ENCODE measurements at regions of chr16 and their contacts with region 1.

Region 1: GRCh38 chr16:75244844-75245758 is 6.3 kb downstream of the BCAR1 start:
- DNase-seq: peak; percentile 96
- H3K4me3 Mint-ChIP-seq: peak overlapping the region; percentile 96
- H3K27ac Mint-ChIP-seq: peak overlapping the region; percentile 93
- H3K4me1 Mint-ChIP-seq: peaks cover 88% of the 10 kb centered on the region
- H3K27me3 Mint-ChIP-seq: no peaks in the 10 kb centered on the region
- CTCF ChIP-seq: no peak

Region 2: DNA sequence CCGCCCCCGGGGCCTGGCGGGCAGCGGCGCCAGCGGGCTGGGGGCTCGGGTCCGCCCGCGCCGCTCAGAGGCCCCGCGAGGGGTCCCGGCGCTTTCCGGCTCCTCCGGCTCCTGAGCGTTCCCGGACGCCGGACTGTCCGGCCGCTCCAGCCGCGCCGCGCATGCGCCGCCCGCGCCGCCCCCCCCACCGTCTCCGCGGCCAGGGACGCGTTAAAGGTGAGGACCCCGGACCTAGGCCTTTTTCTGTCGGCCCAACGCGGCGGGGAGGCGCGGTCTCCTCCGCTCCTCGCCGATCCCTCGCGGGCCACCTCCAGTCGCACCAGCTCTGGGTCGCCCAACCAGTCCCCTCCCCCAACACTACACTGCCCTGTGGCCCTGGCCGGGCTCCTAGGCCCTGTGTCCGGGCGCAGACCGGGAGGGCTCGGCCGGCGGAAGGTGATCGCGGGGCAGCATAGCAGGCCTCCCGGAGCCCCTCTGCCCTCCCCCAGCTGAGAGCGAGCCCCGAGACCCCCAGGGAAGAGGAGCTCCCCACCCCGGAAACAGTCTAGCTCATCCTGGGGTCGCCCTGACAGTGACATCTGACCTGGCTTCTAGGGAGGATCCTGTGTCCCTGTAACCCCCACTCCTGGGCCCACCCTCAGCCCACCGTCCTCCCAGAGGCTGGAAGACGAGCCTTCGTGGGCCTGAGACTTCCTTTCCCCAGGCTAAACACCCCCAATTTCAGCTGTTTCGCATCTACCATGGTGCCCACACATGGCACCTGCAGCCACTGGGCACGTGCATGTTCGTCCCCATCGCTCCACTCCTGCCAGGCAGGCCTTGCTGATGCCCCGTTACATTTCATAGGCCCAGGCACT is 21.0 kb after region 1 on chr16:
- CTCF ChIA-PET with region 1: interaction called, 4 read pairs
- intact Hi-C with region 1: loop called (anchors 2 kb)
- DNase-seq: peak; percentile 89
- H3K4me3 Mint-ChIP-seq: peak overlapping the region; percentile 89
- H3K27ac Mint-ChIP-seq: peak overlapping the region; percentile 90
- H3K4me1 Mint-ChIP-seq: peaks cover 53% of the 10 kb centered on the region
- H3K27me3 Mint-ChIP-seq: no peaks in the 10 kb centered on the region
- CTCF ChIP-seq: no peak

Region 3: GRCh38 chr16:75385507-75386152 is 140.5 kb after region 1 on chr16:
- CTCF ChIA-PET with region 1: interaction called, 7 read pairs
- intact Hi-C with region 1: loop called (anchors 5 kb)
- DNase-seq: no peak
- H3K4me3 Mint-ChIP-seq: no peak overlapping the region
- H3K27ac Mint-ChIP-seq: no peak overlapping the region
- H3K4me1 Mint-ChIP-seq: peaks cover 9% of the 10 kb centered on the region
- H3K27me3 Mint-ChIP-seq: no peaks in the 10 kb centered on the region
- CTCF ChIP-seq: peak; percentile 67

Measured in Calu3 (cell line).